ENCODE measurements at regions of chr5 and their contacts with region 1.

Region 1: GRCh38 chr5:28766565-28767158 is 1728.3 kb upstream of the CDH9 start:
- DNase-seq: peak; percentile 33
- H3K4me3 Mint-ChIP-seq: no peak overlapping the region
- H3K27ac Mint-ChIP-seq: no peak overlapping the region
- H3K4me1 Mint-ChIP-seq: no peaks in the 10 kb centered on the region
- H3K27me3 Mint-ChIP-seq: no peaks in the 10 kb centered on the region
- CTCF ChIP-seq: peak; percentile 44

Region 2: DNA sequence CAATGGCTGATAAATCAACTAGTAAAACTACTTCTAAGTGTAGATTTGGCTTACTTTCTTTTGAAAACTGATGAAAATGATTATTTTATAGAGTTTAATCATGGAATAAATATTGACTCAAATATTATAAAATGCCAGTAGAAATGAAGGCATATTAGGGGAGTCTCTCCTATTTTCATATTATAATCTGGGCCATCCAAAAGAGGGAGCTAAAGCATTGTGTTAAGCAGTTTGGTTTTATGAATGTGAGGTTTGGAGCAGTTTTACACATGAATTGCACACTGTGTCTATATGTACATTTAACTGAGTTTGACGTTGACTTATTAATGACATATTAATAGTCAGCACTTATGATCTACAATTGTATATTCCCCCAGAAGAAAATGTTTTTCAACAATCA is 1745.7 kb before region 1 on chr5:
- CTCF ChIA-PET with region 1: no interaction called
- intact Hi-C with region 1: loop called (anchors 5 kb)
- DNase-seq: no peak
- H3K4me3 Mint-ChIP-seq: no peak overlapping the region
- H3K27ac Mint-ChIP-seq: no peak overlapping the region
- H3K4me1 Mint-ChIP-seq: no peaks in the 10 kb centered on the region
- H3K27me3 Mint-ChIP-seq: no peaks in the 10 kb centered on the region
- CTCF ChIP-seq: no peak

Region 3: GRCh38 chr5:27938989-27939388 is 827.7 kb before region 1 on chr5:
- CTCF ChIA-PET with region 1: no interaction called
- intact Hi-C with region 1: loop called (anchors 10 kb)
- DNase-seq: no peak
- H3K4me3 Mint-ChIP-seq: no peak overlapping the region
- H3K27ac Mint-ChIP-seq: no peak overlapping the region
- H3K4me1 Mint-ChIP-seq: no peaks in the 10 kb centered on the region
- H3K27me3 Mint-ChIP-seq: no peaks in the 10 kb centered on the region
- CTCF ChIP-seq: no peak

Region 4: DNA sequence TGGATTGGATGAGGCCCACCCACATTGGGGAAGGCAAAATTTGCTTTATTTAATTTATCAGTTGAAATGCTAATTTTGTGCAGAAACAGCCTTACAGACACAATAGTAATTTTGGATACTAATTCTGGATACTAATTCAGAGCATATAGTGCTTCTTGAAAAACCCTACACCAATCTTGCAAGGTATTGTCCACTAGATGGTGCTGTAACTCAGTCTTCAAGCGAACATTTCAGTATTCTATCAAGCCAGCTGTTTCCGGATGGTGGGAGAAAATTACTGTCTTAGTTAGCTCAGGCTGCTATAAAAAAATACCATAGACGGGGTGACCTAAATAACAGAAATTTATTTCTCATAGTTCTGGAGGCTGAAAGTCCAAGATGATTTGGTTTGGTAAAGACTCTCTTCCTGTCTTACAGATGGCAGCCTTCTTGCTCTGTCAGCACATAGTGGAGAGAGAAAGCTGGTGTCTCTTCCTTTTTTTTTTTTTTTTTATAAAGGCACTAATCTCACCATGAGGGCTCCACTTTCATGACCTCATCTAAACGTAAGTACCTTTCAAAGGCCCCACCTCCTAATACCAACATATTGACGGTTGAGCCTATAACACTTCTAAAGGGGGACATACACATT is 421.7 kb before region 1 on chr5:
- CTCF ChIA-PET with region 1: no interaction called
- intact Hi-C with region 1: loop called (anchors 2 kb)
- DNase-seq: peak; percentile 13
- H3K4me3 Mint-ChIP-seq: no peak overlapping the region
- H3K27ac Mint-ChIP-seq: no peak overlapping the region
- H3K4me1 Mint-ChIP-seq: no peaks in the 10 kb centered on the region
- H3K27me3 Mint-ChIP-seq: no peaks in the 10 kb centered on the region
- CTCF ChIP-seq: peak; percentile 12

Region 5: GRCh38 chr5:28473531-28474107 is 293.0 kb before region 1 on chr5:
- CTCF ChIA-PET with region 1: no interaction called
- intact Hi-C with region 1: loop called (anchors 2 kb)
- DNase-seq: peak; percentile 1
- H3K4me3 Mint-ChIP-seq: no peak overlapping the region
- H3K27ac Mint-ChIP-seq: no peak overlapping the region
- H3K4me1 Mint-ChIP-seq: no peaks in the 10 kb centered on the region
- H3K27me3 Mint-ChIP-seq: no peaks in the 10 kb centered on the region
- CTCF ChIP-seq: no peak

Measured in Calu3 (cell line).